ENCODE measurements at regions of chr3 and their contacts with region 1.

Region 1: DNA sequence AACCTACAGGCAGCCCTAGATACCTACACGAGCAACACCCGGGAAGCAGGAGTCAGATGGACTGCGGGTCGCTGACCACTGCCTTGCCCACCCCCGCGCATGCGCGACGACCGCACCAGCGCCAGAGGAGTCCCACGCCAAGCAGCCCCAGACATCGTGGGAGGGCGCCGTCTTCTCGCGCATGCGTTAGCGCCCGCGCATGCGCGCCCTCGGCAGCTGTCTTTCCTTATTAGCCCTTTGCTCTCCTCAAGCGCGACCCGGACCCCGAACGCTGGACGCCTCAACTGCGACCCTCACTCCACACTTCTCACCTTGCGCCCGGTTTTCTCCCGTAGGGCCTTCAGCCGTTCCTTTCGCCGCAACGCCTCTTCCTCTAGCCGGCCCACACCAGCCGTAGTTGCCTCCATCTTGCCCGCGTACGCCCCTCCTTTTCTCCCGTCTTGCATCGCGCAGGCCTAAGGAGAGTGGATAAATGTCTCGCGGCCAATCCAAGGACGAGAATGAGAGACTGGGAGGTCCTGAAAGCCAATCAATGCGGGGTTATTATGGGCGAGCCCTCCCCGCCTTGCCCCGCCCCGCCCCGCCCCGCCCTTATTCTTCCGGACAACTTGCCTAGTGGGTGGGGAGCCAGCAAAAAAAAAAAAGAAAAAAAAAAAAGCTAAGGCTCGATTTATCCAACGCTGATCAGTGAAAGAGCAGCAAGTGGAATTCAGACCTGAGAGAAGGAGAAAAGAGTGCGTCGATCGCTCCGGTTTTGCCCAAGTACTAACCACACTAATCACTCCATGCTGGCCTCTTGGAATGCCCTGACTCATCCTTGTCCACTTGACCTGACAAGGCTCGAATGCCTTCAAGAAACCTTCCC is at the start of gene CCDC12:
- DNase-seq: peak; percentile 84 to 92
- H3K4me3 ChIP-seq: peak within 1 kb of the TSS; percentile 80 to 98 (median 97)
- H3K27ac ChIP-seq: peak within 1 kb of the TSS; percentile 99
- H3K4me1 ChIP-seq: peaks cover 0 to 18% (median 8%) of the 10 kb centered on the region in 4 experiments; a peak in 6 of 7 replicates
- H3K27me3 ChIP-seq: peaks cover 0 to 9% (median 3%) of the 10 kb centered on the region in 4 experiments; a peak in 3 of 7 replicates
- CTCF ChIP-seq: no peak
- EP300 ChIP-seq: no peak
- POLR2A ChIP-seq: peak in 1 of 2 experiments; percentile 95; a peak in 2 of 3 replicates
- RAD21 ChIP-seq: no peak
- total RNA-seq, gene CCDC12: 41.3 and 44.4 TPM in 2 replicates

Region 2: GRCh38 chr3:46935168-46935858 is 41.2 kb before region 1 on chr3:
- CTCF ChIA-PET with region 1: interaction called, 10 read pairs
- POLR2A ChIA-PET with region 1: interaction called, 5 read pairs
- DNase-seq: peak in 1 of 2 experiments; percentile 64
- H3K4me3 ChIP-seq: 0 out of 8 replicates have a peak overlapping the region, but pooled peaks of 1 of the 4 experiments have one; percentile 17
- H3K27ac ChIP-seq: peak overlapping the region; percentile 53; the same call in 1 of the 2 replicates
- H3K4me1 ChIP-seq: peaks cover 4 to 14% (median 10%) of the 10 kb centered on the region in 4 experiments; a peak in 6 of 7 replicates
- H3K27me3 ChIP-seq: no peaks in the 10 kb centered on the region
- CTCF ChIP-seq: peak; percentile 52 to 72 (median 60)
- EP300 ChIP-seq: no peak
- POLR2A ChIP-seq: no peak
- RAD21 ChIP-seq: peak; percentile 40 to 47

Region 3: GRCh38 chr3:46960081-46960701 is 16.4 kb before region 1 on chr3:
- CTCF ChIA-PET with region 1: interaction called, 5 read pairs
- POLR2A ChIA-PET with region 1: interaction called, 12 read pairs
- DNase-seq: no peak
- H3K4me3 ChIP-seq: no peak overlapping the region
- H3K27ac ChIP-seq: no peak overlapping the region
- H3K4me1 ChIP-seq: peaks cover 0 to 5% (median 2%) of the 10 kb centered on the region in 4 experiments; a peak in 2 of 7 replicates
- H3K27me3 ChIP-seq: no peaks in the 10 kb centered on the region
- CTCF ChIP-seq: no peak
- EP300 ChIP-seq: no peak
- POLR2A ChIP-seq: no peak
- RAD21 ChIP-seq: no peak

Region 4: GRCh38 chr3:47009225-47010110 is 32.9 kb after region 1 on chr3:
- CTCF ChIA-PET with region 1: interaction called, 130 read pairs
- POLR2A ChIA-PET with region 1: interaction called, 10 read pairs
- DNase-seq: peak; percentile 73 to 83
- H3K4me3 ChIP-seq: peak overlapping the region; percentile 34 to 63 (median 44); a peak in 7 of 8 replicates
- H3K27ac ChIP-seq: peak overlapping the region; percentile 95
- H3K4me1 ChIP-seq: peaks cover 0 to 9% (median 5%) of the 10 kb centered on the region in 4 experiments; a peak in 5 of 7 replicates
- H3K27me3 ChIP-seq: no peaks in the 10 kb centered on the region
- CTCF ChIP-seq: no peak
- EP300 ChIP-seq: no peak
- POLR2A ChIP-seq: peak in 1 of 2 experiments; percentile 71; a peak in 2 of 3 replicates
- RAD21 ChIP-seq: no peak

Measured in H1 (cell line).